ENCODE measurements at regions of chr15 and their contacts with region 1.

Region 1: GRCh38 chr15:74615508-74616365 is at the start of gene CLK3:
- DNase-seq: peak; percentile 93 to 97 (median 94)
- ATAC-seq: peak; percentile 94
- H3K4me3 ChIP-seq: peak within 1 kb of the TSS; percentile 89
- H3K27ac ChIP-seq: peak within 1 kb of the TSS; percentile 84
- H3K4me1 ChIP-seq: peaks cover 19 to 49% of the 10 kb centered on the region in 2 experiments
- H3K27me3 ChIP-seq: no peaks in the 10 kb centered on the region; a peak in 1 of 5 replicates
- CTCF ChIP-seq: no peak
- EP300 ChIP-seq: no peak
- POLR2A ChIP-seq: peak; percentile 70
- RAD21 ChIP-seq: 0 out of 4 replicates have a peak, but pooled peaks of 1 of the 2 experiments have one; percentile 25
- polyA plus RNA-seq, gene CLK3: 1.2 to 6.9 TPM

Region 2: DNA sequence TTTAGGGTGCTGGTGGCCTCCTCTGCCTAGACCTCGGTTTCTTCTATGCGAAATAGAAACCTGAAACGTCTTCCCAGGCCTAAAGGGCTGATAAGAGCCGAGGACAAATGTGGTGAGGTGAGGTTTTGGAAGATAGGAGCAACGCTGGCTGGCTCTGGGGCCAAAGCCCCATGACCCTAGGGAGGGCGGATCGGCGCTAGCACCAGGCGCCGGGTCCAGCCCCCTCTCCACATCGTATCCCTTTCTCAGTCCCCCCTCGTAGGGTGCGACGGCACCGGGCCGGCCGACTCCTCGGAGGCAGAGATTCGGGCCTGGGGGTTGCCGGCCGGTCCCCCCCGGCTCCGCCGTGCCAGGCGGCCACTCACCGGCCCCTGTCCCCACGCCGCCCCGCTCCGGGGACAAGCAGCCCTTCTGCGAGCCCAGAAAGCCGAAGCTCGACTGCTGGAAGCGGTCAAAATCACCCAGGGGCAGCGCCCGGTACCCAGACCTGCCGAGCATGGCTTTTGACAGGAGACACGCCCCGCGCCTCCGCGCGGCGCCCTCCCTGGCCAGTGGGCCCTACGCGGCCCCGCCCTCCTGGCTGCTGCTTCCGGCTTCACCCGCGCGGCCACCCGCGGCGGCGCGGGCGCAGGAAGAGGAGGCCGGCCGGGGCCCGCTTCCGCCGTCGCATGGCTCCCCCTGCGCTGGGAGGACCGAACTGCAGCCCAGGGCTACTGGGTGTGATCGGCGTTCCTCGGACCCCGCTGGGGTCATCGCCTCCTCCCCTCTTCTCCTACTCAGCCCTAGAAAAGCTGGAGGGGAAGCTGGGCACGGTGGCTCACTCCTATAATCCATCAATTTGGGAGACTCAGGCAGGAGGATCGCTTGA is 623.8 kb before region 1 on chr15 and contains the start of gene STOML1:
- CTCF ChIA-PET with region 1: no interaction called
- POLR2A ChIA-PET with region 1: no interaction called
- in situ Hi-C with region 1: no loop called
- intact Hi-C with region 1: loop called (anchors 10 kb)
- DNase-seq: peak; percentile 93 to 96 (median 95)
- ATAC-seq: peak; percentile 91
- H3K4me3 ChIP-seq: peak within 1 kb of the TSS; percentile 86
- H3K27ac ChIP-seq: peak within 1 kb of the TSS; percentile 56
- H3K4me1 ChIP-seq: peaks cover 38 to 46% of the 10 kb centered on the region in 2 experiments
- H3K27me3 ChIP-seq: no peaks in the 10 kb centered on the region; a peak in 1 of 5 replicates
- CTCF ChIP-seq: peak; percentile 85 to 92 (median 87)
- EP300 ChIP-seq: peak; percentile 66; the same call in 1 of the 2 replicates
- POLR2A ChIP-seq: peak; percentile 70
- RAD21 ChIP-seq: no peak
- polyA plus RNA-seq, gene STOML1: 0.25 to 0.53 TPM

Region 3: DNA sequence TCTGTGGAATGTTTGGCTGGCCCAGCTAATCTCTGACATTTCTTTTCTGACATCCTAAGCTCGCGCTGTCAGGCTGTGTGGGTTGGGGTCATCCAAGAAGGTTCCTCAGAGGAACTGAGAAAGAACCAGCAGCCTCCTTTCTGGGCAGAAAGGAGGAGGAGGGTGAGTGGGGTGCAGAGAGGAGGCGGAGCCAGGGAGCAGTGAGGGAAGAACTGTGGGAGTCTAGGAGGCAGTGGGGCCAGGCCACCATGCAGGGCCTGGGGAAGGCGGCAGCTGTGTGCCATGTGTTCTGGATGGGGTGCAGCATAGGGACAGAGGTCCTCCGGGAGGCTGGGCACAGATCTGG is 187.3 kb before region 1 on chr15:
- CTCF ChIA-PET with region 1: no interaction called
- POLR2A ChIA-PET with region 1: no interaction called
- in situ Hi-C with region 1: no loop called
- intact Hi-C with region 1: no loop called
- DNase-seq: peak in 1 of 4 experiments; percentile 33
- ATAC-seq: no peak
- H3K4me3 ChIP-seq: no peak overlapping the region
- H3K27ac ChIP-seq: no peak overlapping the region
- H3K4me1 ChIP-seq: peaks cover 73 to 83% of the 10 kb centered on the region in 2 experiments
- H3K27me3 ChIP-seq: no peaks in the 10 kb centered on the region
- CTCF ChIP-seq: no peak
- EP300 ChIP-seq: no peak
- POLR2A ChIP-seq: no peak
- RAD21 ChIP-seq: no peak

Region 4: DNA sequence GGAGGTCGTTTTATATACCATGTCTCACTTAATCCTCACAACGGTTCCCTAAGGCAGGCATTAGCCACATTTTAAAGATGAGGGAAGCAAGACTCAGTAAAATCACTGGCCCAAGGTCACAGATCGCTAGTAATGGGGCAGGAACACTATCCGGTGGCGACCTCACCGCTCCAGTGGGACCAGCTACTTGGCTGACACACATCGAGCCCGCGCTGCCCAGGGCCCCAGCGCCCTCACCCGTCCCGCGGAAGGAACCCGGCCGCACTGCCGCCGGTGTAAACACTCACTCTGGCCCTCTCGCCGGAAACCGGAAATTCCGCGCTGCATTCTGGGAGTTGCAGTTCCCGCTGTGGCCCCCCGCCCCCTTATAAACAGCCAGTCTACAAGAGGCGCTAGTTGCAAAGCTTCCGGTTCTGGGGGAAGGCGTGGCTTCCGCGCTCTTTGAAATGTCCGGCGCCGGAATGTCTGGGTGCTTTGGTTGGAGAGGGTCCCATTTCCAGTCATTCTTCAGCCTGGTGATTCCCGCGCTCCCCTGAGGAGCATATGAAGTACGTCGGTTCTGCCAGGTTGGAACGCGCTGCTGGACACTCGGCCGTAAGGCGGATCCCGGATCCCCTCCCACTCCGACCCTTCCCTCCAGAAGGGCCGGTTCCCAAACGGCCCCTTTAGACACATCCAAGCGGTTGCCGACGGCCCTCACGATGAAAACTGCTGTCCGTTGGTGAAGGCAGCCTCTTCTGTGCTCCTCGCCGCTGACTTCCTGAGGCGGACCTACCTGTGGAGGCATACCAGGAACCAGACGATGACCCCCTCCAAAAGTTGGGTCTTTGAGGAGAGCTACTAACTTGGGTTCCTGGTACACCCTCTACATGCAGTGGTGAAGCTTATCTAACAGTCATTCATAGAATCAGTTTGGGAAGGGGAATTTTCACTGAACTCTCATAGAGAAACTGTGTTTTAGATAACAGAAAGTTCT is 154.6 kb before region 1 on chr15 and contains the start of gene UBL7:
- CTCF ChIA-PET with region 1: no interaction called
- POLR2A ChIA-PET with region 1: interaction called, 3 read pairs
- in situ Hi-C with region 1: no loop called
- intact Hi-C with region 1: loop called (anchors 5 kb)
- DNase-seq: peak; percentile 91 to 99 (median 92)
- ATAC-seq: peak; percentile 90
- H3K4me3 ChIP-seq: peak within 1 kb of the TSS; percentile 73
- H3K27ac ChIP-seq: peak within 1 kb of the TSS; percentile 91
- H3K4me1 ChIP-seq: peaks cover 16 to 18% of the 10 kb centered on the region in 2 experiments; a peak in 4 of 5 replicates
- H3K27me3 ChIP-seq: no peaks in the 10 kb centered on the region
- CTCF ChIP-seq: peak; percentile 36 to 50 (median 46); a peak in 4 of 6 replicates
- EP300 ChIP-seq: peak; percentile 55
- POLR2A ChIP-seq: peak; percentile 94
- RAD21 ChIP-seq: peak in 1 of 2 experiments; percentile 53; a peak in 2 of 4 replicates
- polyA plus RNA-seq, gene UBL7: 19.2 to 44.9 TPM

Region 5: DNA sequence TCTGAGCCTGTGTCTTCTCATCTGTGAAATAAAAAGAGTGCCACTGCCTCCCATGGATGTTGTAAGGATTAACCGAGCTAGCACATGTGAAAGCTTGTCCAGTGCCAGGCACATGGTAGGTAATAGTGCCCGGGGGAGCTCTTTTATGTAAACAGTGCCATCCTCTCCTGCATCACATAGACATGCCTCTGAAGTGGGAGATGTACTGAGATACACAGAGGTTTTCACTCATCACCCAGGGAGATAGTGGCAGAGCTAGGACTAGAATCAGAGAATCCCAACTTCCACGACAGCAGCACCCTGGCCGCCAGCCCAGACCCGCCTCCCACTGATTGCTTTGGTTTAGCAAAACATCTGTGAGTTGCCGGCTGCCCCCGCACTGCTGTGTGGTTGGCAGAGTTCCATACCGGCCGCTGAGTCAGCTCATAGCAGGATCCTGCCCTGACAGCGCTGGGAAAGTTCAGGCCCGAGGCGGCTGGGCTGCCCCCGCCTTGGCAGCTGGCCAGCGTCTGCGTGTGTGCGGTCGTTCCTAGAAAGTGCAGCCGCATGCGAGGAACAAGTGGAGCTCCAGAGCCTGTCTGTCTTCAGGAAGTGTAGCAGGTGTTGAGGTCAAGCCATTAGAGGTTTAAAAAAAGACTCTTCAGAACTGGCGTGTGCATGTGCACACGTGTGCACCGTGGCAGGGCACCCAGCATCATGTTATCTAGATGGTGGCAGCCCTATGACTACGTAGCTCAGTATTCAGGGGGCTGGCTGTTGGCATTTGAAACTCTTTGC is 69.7 kb before region 1 on chr15:
- CTCF ChIA-PET with region 1: no interaction called
- POLR2A ChIA-PET with region 1: interaction called, 8 read pairs
- in situ Hi-C with region 1: loop called (anchors 5 kb)
- intact Hi-C with region 1: loop called (anchors 1 kb)
- DNase-seq: peak; percentile 94 to 100 (median 94)
- ATAC-seq: peak; percentile 92
- H3K4me3 ChIP-seq: no peak overlapping the region
- H3K27ac ChIP-seq: no peak overlapping the region
- H3K4me1 ChIP-seq: peaks cover 16 to 28% of the 10 kb centered on the region in 2 experiments
- H3K27me3 ChIP-seq: no peaks in the 10 kb centered on the region
- CTCF ChIP-seq: 0 out of 6 replicates have a peak, but pooled peaks of 1 of the 3 experiments have one; percentile 4
- EP300 ChIP-seq: no peak; the same call in none of the 2 replicates
- POLR2A ChIP-seq: no peak
- RAD21 ChIP-seq: peak in 1 of 2 experiments; percentile 45; a peak in 2 of 4 replicates

Region 6: GRCh38 chr15:74626752-74627692 is 11.3 kb after region 1 on chr15:
- CTCF ChIA-PET with region 1: interaction called, 3 read pairs
- POLR2A ChIA-PET with region 1: interaction called, 19 read pairs
- in situ Hi-C with region 1: no loop called
- intact Hi-C with region 1: no loop called
- DNase-seq: no peak
- ATAC-seq: no peak
- H3K4me3 ChIP-seq: no peak overlapping the region
- H3K27ac ChIP-seq: no peak overlapping the region; the same call in 2 of the 3 replicates
- H3K4me1 ChIP-seq: peaks cover 0 to under 1% of the 10 kb centered on the region in 2 experiments; a peak in 2 of 5 replicates
- H3K27me3 ChIP-seq: no peaks in the 10 kb centered on the region
- CTCF ChIP-seq: no peak
- EP300 ChIP-seq: no peak
- POLR2A ChIP-seq: no peak
- RAD21 ChIP-seq: no peak

Region 7: DNA sequence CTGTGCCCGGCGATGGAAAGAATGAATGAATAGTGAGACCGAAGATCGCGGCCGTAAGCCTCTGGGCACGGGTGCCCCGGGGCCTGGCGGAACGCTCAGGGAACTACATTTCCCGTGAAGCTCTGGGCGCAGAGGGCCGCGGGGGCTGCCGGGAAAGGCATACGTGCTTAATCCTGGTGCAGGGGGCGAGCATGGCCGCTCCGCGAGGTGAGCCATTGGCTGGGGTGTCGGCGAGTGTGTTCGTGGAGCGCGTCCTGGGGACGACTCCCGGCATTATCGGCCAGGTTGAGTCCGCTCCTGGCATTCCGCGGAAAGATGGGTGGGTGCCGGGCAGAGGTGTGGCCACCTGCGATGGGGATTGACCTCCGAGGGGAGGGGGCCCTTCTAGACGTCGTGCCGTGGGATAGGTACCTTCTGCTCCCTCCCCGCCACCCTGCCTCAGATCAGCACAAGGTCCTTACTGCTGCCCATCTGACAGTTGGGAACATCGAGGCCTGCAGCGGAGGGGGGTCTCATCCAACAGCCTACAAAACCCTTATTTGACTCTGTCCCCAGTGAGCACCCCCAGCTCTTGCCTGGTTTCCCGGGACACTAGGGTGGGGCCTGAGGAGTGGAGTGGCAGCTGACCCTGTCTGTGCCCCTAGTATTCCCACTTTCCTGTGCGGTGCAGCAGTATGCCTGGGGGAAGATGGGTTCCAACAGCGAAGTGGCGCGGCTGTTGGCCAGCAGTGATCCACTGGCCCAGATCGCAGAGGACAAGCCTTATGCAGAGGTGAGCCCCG is 274.3 kb after region 1 on chr15 and contains the start of gene MPI:
- CTCF ChIA-PET with region 1: no interaction called
- POLR2A ChIA-PET with region 1: no interaction called
- in situ Hi-C with region 1: no loop called
- intact Hi-C with region 1: no loop called
- DNase-seq: peak; percentile 91 to 93 (median 92)
- ATAC-seq: peak; percentile 95
- H3K4me3 ChIP-seq: peak within 1 kb of the TSS; percentile 72
- H3K27ac ChIP-seq: peak within 1 kb of the TSS; percentile 76
- H3K4me1 ChIP-seq: peaks cover 26 to 33% of the 10 kb centered on the region in 2 experiments; a peak in 4 of 5 replicates
- H3K27me3 ChIP-seq: no peaks in the 10 kb centered on the region
- CTCF ChIP-seq: no peak
- EP300 ChIP-seq: no peak
- POLR2A ChIP-seq: peak; percentile 96
- RAD21 ChIP-seq: no peak
- polyA plus RNA-seq, gene MPI: 41.8 to 46.7 TPM

Measured in K562 (cell line).